Transverse colon (tissue), 4 donors: ENCODE measurements at regions of chr15 and their contacts with region 1.

Region 1: DNA sequence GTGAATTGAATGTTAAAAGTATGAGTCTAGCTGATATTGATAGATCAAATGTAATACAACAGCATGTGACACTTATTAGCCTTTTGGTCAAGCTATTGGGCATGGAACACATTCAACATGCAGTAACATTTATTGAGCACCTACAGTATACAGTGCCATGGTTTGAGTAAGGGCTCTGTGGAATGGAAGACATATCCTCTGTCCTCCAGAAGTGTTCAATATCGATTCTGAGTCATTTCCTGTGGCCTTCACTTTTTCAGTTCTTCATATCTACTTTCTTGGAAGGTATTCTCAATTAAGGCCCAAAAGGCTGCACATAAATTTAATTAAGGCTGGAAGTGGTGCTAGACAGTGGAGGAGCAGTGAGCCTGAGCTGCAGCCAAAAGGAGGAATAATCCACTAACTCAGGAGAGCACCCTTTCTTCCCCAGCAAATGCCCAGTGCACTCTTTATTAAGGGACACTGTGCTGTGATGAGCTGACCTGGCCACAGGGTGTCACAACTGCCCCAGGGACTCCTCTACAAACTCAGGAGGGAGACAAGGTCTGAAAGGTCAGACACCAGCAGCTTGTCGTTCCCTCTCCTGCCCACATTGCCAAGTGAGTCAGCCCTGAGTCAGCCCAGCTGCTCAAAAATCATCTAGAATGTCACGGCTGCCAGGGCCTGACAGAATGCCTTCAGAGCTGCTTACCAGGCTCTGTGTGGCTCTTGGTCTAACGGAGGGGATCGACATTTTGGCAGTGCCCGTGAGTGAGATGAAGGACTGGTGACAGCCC is 544.8 kb downstream of the AGBL1 start:
- DNase-seq: peak; percentile 79
- H3K4me3 ChIP-seq: no peak overlapping the region
- H3K27ac ChIP-seq: no peak overlapping the region
- H3K4me1 ChIP-seq: peaks cover 0 to 33% (median 14%) of the 10 kb centered on the region in 4 donors
- H3K27me3 ChIP-seq: no peaks in the 10 kb centered on the region
- CTCF ChIP-seq: peak; percentile 34 to 86 (median 54)
- EP300 ChIP-seq: no peak
- POLR2A ChIP-seq: no peak

Region 2: DNA sequence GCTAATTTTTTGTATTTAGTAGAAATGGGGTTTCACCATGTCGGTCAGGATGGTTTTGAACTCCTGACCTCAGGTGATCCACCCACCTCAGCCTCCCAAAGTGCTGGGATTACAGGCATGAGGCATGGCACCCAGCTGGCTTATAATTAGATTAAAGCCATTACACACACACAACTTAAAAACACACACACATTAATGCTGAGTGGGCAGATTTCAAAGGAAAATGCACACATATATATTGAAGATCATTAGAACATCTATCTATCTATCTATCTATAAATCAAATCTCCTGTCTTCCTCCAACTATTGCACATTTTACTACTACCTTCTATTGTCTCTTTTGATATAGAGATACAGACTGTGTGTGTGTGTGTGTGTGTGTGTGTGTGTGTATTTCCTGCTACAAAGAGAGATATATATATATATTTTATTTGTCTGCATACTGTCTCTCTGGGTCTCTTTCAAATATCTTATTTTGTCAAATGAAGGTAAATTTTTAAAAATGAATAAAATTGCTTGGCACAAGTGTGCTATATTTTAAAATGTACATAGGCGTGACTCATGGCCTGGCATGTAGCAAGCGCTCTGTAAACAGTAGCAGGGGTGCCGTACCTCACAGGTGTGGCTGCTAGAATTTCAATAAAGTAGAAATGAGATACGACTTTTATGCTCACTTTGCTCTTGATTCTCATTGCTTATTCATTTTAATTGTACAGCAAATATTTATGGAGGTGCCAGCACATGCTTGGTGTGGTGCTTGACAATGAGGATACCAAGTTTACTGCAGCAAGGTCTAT is 111.0 kb after region 1 on chr15:
- in situ Hi-C with region 1: loop called in 2 of 4 experiments (anchors 10 kb)
- intact Hi-C with region 1: no loop called
- DNase-seq: peak; percentile 45
- H3K4me3 ChIP-seq: no peak overlapping the region
- H3K27ac ChIP-seq: peak overlapping the region in 1 of 4 donors; percentile 2
- H3K4me1 ChIP-seq: peaks cover 0 to 11% (median 2%) of the 10 kb centered on the region in 4 donors
- H3K27me3 ChIP-seq: no peaks in the 10 kb centered on the region
- CTCF ChIP-seq: no peak
- EP300 ChIP-seq: no peak
- POLR2A ChIP-seq: no peak

Region 3: DNA sequence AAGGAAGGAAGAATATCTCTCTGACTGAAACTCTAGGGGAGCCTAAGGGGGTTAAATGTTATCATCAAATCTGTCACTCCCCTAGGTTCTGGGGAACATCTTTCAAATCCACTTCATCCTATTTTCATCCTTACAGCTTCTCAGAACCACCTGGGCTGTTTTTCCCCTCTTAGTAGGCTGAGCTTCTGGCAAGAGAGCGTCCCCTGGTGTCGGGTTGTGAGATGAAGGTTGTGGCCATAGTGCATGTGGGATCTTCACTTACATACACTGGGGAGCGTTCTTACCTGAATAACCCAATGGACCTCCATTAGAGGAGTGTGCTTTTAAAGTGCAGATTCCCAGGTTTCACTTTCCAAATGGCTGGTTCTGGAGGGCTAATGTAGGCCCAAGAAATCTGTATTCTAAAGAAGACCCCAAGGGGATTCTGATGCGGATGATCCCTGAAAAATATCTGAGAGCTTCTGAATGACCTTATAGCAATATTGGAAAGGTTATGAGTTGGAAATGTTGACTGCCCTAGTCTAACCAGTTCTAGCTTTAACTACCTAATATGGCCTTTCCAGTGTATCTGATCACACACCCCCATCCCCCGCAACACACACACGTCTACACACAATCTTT is 118.9 kb after region 1 on chr15:
- in situ Hi-C with region 1: loop called in 2 of 4 experiments (anchors 10 kb)
- intact Hi-C with region 1: no loop called
- DNase-seq: peak; percentile 64
- H3K4me3 ChIP-seq: no peak overlapping the region
- H3K27ac ChIP-seq: no peak overlapping the region
- H3K4me1 ChIP-seq: peaks cover 0 to 3% (median 1%) of the 10 kb centered on the region in 4 donors
- H3K27me3 ChIP-seq: no peaks in the 10 kb centered on the region
- CTCF ChIP-seq: peak; percentile 62 to 81 (median 73)
- EP300 ChIP-seq: no peak
- POLR2A ChIP-seq: no peak